ENCODE measurements at regions of chr17 and their contacts with region 1.

Region 1: GRCh38 chr17:62065598-62066468 is 755 bp upstream of the MED13 start:
- DNase-seq: peak; percentile 99
- H3K4me3 Mint-ChIP-seq: peak overlapping the region; percentile 94
- H3K27ac Mint-ChIP-seq: peak overlapping the region; percentile 96
- H3K4me1 Mint-ChIP-seq: peaks cover 30% of the 10 kb centered on the region
- H3K27me3 Mint-ChIP-seq: no peaks in the 10 kb centered on the region

Region 2: DNA sequence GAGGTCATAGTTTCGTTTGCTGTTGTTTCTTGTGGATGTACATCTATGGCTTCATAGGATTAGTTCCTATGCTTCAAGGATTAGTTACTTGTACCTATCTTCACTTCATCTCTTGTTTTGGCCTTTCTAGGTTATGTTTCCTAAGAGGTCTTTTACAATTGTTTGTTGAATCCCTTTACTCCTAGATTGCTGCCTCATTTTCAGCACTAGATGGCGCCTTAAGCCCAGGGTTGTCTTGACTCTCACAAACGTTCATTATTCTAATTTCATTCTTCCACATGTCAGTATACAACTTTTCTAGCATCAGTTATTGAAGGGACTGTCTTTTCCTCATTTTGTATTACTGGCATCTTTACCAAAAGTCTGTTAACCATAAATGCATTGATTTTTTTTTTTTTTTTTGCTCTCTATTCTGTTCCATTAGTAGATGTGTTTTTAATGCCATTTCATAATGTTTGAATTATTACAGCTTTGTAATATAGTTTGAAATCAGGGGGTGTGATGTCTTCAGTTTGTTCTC is 429.9 kb before region 1 on chr17:
- CTCF ChIA-PET with region 1: interaction called, 4 read pairs
- POLR2A ChIA-PET with region 1: no interaction called
- intact Hi-C with region 1: loop called (anchors 1 kb)
- DNase-seq: peak; percentile 65
- H3K4me3 Mint-ChIP-seq: no peak overlapping the region
- H3K27ac Mint-ChIP-seq: no peak overlapping the region
- H3K4me1 Mint-ChIP-seq: no peaks in the 10 kb centered on the region
- H3K27me3 Mint-ChIP-seq: peaks cover 34% of the 10 kb centered on the region

Region 3: GRCh38 chr17:61927200-61928165 is 138.3 kb before region 1 on chr17 and contains the start of gene INTS2:
- CTCF ChIA-PET with region 1: no interaction called
- POLR2A ChIA-PET with region 1: no interaction called
- intact Hi-C with region 1: loop called (anchors 1 kb)
- DNase-seq: peak; percentile 97
- H3K4me3 Mint-ChIP-seq: peak within 1 kb of the TSS; percentile 90
- H3K27ac Mint-ChIP-seq: peak within 1 kb of the TSS; percentile 92
- H3K4me1 Mint-ChIP-seq: peaks cover 20% of the 10 kb centered on the region
- H3K27me3 Mint-ChIP-seq: no peaks in the 10 kb centered on the region
- total RNA-seq, gene INTS2: 23.0 to 27.4 TPM

Region 4: DNA sequence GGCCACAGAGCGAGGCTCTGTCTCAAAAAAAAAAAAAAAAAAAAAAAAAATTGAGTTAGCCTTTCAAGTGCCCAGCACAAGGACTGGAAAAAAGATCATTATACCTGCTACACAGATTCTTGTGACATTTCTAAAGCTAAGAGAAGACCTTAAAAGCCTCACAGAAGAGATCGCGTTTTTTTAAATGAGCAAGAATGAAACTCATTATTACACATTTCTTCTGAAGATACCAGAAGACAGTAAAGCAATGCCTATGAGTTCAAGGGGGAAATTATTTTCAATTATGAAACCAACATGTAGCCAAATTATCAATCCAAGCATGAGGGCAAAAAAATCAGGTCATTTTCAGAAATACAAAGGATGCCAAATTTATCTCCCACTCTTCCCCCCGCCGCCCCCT is 57.5 kb before region 1 on chr17:
- CTCF ChIA-PET with region 1: interaction called, 6 read pairs
- POLR2A ChIA-PET with region 1: no interaction called
- intact Hi-C with region 1: loop called (anchors 5 kb)
- DNase-seq: no peak
- H3K4me3 Mint-ChIP-seq: no peak overlapping the region
- H3K27ac Mint-ChIP-seq: peak overlapping the region; percentile 58
- H3K4me1 Mint-ChIP-seq: peaks cover 30% of the 10 kb centered on the region
- H3K27me3 Mint-ChIP-seq: no peaks in the 10 kb centered on the region

Region 5: DNA sequence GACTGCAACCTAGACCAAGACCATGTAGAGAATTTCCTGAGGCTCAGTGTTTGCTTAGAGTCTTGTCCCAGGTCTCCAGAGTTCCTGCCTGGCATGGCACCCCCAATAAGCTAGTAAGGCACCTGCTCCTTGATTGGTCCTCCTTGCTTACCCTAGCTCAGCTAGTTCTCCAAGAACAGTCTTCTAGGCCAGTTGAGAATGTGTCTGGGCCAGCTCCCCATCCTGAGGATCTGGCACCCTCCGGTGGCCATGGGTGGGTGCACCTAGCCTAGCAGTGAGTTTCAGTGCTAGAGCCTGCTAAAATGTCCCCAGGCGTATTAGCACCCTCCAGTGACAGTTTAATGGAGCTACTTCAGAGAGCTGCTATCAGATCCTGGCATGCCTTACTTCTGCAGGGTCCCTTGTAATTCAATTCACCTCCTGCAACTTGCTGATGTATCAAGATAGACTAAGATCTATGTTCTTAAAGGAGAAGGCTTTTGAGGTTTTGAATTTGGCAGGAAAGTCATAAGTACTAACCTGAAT is 43.6 kb after region 1 on chr17:
- CTCF ChIA-PET with region 1: interaction called, 16 read pairs
- POLR2A ChIA-PET with region 1: interaction called, 6 read pairs
- intact Hi-C with region 1: loop called (anchors 2 kb)
- DNase-seq: peak; percentile 84
- H3K4me3 Mint-ChIP-seq: no peak overlapping the region
- H3K27ac Mint-ChIP-seq: no peak overlapping the region
- H3K4me1 Mint-ChIP-seq: no peaks in the 10 kb centered on the region
- H3K27me3 Mint-ChIP-seq: peaks cover 3% of the 10 kb centered on the region

Region 6: GRCh38 chr17:62145876-62146275 is 80.0 kb after region 1 on chr17:
- CTCF ChIA-PET with region 1: no interaction called
- POLR2A ChIA-PET with region 1: no interaction called
- intact Hi-C with region 1: no loop called
- DNase-seq: no peak
- H3K4me3 Mint-ChIP-seq: no peak overlapping the region
- H3K27ac Mint-ChIP-seq: no peak overlapping the region
- H3K4me1 Mint-ChIP-seq: no peaks in the 10 kb centered on the region
- H3K27me3 Mint-ChIP-seq: peaks cover 1% of the 10 kb centered on the region